Activated CD4-positive, alpha-beta T cell treated with anti-CD3 and anti-CD28 coated beads, Interleukin-2, amount 10 ng/mL, durations not matched to agents 24 days and 14 days (primary cell): ENCODE measurements at regions of chr6 and their contacts with region 1.

Region 1: GRCh38 chr6:26122793-26123674 is 35.8 kb downstream of the HFE start:
- DNase-seq: peak; percentile 97
- H3K4me3 Mint-ChIP-seq: peak overlapping the region; percentile 96
- H3K27ac Mint-ChIP-seq: peak overlapping the region; percentile 99
- H3K4me1 Mint-ChIP-seq: peaks cover 44% of the 10 kb centered on the region
- H3K27me3 Mint-ChIP-seq: peaks cover 5% of the 10 kb centered on the region

Region 2: GRCh38 chr6:26054857-26055669 is 68.0 kb before region 1 on chr6:
- intact Hi-C with region 1: loop called (anchors 1 kb)
- DNase-seq: peak; percentile 96
- H3K4me3 Mint-ChIP-seq: peak overlapping the region; percentile 94
- H3K27ac Mint-ChIP-seq: peak overlapping the region; percentile 99
- H3K4me1 Mint-ChIP-seq: peaks cover 30% of the 10 kb centered on the region
- H3K27me3 Mint-ChIP-seq: peaks cover 2% of the 10 kb centered on the region

Region 3: GRCh38 chr6:26156076-26156849 is 33.2 kb after region 1 on chr6:
- intact Hi-C with region 1: loop called (anchors 1 kb)
- DNase-seq: peak; percentile 97
- H3K4me3 Mint-ChIP-seq: peak overlapping the region; percentile 90
- H3K27ac Mint-ChIP-seq: peak overlapping the region; percentile 93
- H3K4me1 Mint-ChIP-seq: peaks cover 53% of the 10 kb centered on the region
- H3K27me3 Mint-ChIP-seq: peaks cover 11% of the 10 kb centered on the region

Region 4: GRCh38 chr6:26216356-26216885 is 93.4 kb after region 1 on chr6:
- intact Hi-C with region 1: loop called (anchors 1 kb)
- DNase-seq: peak; percentile 96
- H3K4me3 Mint-ChIP-seq: no peak overlapping the region
- H3K27ac Mint-ChIP-seq: no peak overlapping the region
- H3K4me1 Mint-ChIP-seq: peaks cover 27% of the 10 kb centered on the region
- H3K27me3 Mint-ChIP-seq: no peaks in the 10 kb centered on the region

Region 5: DNA sequence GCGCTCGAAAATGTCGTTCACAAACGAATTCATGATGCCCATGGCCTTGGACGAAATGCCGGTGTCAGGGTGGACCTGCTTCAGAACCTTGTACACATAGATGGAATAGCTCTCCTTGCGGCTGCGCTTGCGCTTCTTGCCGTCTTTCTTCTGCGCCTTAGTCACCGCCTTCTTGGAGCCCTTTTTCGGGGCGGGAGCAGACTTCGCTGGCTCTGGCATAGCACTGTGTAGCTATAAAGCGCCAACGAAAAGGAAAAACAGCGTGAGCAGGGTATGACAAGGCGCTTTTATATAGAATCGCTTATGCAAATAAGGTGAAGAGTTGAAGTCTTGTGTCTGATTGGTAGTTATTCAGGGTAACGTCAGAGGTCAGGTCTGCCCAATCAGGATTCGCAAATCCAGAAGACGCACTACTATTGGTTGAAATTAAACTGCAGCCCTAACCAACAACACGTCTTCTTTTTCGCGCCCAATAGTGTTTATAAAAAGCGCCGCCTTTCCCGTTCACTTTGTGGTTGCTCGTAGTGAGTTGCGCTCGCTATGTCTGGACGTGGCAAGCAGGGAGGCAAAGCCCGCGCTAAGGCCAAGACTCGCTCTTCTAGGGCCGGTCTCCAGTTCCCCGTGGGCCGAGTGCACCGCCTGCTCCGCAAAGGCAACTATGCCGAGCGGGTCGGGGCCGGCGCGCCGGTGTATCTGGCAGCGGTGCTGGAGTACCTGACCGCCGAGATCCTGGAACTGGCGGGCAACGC is 1009.7 kb after region 1 on chr6:
- intact Hi-C with region 1: loop called (anchors 2 kb)
- DNase-seq: peak; percentile 98
- H3K4me3 Mint-ChIP-seq: no peak overlapping the region
- H3K27ac Mint-ChIP-seq: no peak overlapping the region
- H3K4me1 Mint-ChIP-seq: peaks cover 37% of the 10 kb centered on the region
- H3K27me3 Mint-ChIP-seq: no peaks in the 10 kb centered on the region

Region 6: GRCh38 chr6:27871924-27872638 is 1749.0 kb after region 1 on chr6:
- intact Hi-C with region 1: loop called (anchors 2 kb)
- DNase-seq: peak; percentile 97
- H3K4me3 Mint-ChIP-seq: peak overlapping the region; percentile 92
- H3K27ac Mint-ChIP-seq: peak overlapping the region; percentile 96
- H3K4me1 Mint-ChIP-seq: peaks cover 56% of the 10 kb centered on the region
- H3K27me3 Mint-ChIP-seq: peaks cover 2% of the 10 kb centered on the region